PC-9 (cell line): ENCODE measurements at regions of chr22 and their contacts with region 1.

Region 1: DNA sequence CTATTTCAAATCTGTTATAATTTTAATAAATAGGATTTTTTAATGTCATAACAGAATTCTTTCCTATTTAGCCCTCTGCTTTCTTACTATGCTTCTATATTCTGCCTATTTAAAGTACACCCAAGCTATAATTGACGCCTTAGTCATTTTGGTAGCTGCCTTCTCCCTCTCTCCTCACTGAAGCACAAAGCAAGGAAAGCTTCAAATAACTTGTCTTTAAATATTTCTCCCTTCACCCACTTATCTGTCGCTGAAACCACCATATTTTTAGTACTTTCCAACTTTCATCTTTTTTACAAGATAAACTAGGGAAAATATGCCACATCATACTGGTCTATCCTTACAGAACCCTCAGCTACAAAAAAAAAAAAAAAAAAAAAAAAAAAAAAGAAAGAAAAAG is 127.9 kb downstream of the ENTHD1 start:
- DNase-seq: no peak
- H3K4me3 ChIP-seq: no peak overlapping the region
- H3K27ac ChIP-seq: no peak overlapping the region
- H3K4me1 ChIP-seq: no peaks in the 10 kb centered on the region
- H3K27me3 ChIP-seq: peaks cover 33% of the 10 kb centered on the region
- CTCF ChIP-seq: no peak

Region 2: DNA sequence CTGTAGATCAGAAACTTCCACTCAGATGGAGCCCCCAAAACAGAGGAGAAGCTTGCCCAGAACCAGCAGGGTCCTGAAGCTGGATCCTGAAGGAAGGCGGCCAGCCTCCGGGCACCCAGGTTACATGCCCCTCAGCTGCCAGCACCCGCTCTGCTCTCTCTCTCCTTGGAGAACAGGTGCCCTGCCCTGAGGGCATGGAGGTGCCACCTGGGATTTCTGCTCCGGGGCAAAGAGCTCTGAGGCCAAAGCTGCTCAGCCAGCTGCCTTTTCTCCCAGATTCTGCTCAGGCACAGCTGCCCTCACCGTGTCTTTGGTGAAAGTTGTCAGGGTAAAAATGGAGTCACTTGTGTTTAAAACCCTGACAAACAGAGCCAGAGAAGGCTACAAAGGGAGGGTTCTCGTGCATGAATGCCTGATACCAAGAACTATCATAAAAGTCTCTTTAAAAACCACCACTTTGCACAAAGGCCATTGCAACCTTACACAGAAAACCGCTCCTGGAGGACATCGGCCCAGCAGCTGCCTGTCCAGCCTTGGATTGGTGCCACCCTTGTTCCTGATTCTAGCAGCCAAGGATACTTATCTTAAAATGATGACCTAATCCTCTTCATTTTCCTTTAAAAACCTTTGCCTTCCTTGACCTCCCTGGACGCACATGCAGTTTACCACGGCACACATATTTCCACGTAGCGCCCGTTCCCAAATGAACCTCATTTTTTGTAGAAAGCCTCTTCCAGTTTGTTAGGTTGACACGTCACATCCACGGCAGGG is 55.1 kb before region 1 on chr22:
- CTCF ChIA-PET with region 1: no interaction called
- POLR2A ChIA-PET with region 1: no interaction called
- intact Hi-C with region 1: no loop called
- DNase-seq: peak in 1 of 2 experiments; percentile 56
- H3K4me3 ChIP-seq: no peak overlapping the region
- H3K27ac ChIP-seq: no peak overlapping the region
- H3K4me1 ChIP-seq: no peaks in the 10 kb centered on the region; the same call in 1 of the 2 replicates
- H3K27me3 ChIP-seq: peaks cover 82% of the 10 kb centered on the region
- CTCF ChIP-seq: no peak

Region 3: GRCh38 chr22:39789788-39790187 is 24.1 kb after region 1 on chr22:
- CTCF ChIA-PET with region 1: no interaction called
- POLR2A ChIA-PET with region 1: no interaction called
- intact Hi-C with region 1: no loop called
- DNase-seq: no peak
- H3K4me3 ChIP-seq: no peak overlapping the region
- H3K27ac ChIP-seq: no peak overlapping the region
- H3K4me1 ChIP-seq: no peaks in the 10 kb centered on the region
- H3K27me3 ChIP-seq: peaks cover 54% of the 10 kb centered on the region
- CTCF ChIP-seq: no peak

Region 4: DNA sequence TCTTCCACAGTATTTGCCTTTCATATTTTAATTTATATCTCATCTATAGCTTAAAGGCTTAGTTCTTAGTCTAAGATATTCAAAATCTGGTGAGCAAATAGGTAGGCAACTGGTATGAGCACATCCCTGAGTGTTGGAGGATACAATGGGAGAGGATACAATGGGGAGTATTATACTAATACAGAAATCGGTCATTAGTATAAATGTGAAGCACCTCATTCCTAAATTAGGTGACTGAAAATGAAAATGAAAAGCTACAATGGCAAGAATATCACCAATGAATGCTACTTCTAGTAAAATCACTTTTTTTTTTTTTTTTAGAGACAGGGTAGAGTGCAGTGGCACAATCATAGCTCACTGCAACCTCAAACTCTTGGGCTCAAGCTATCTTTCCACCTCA is 106.9 kb after region 1 on chr22:
- CTCF ChIA-PET with region 1: no interaction called
- POLR2A ChIA-PET with region 1: interaction called, 20 read pairs
- intact Hi-C with region 1: no loop called
- DNase-seq: no peak
- H3K4me3 ChIP-seq: no peak overlapping the region
- H3K27ac ChIP-seq: no peak overlapping the region
- H3K4me1 ChIP-seq: no peaks in the 10 kb centered on the region
- H3K27me3 ChIP-seq: peaks cover 29% of the 10 kb centered on the region
- CTCF ChIP-seq: no peak